ENCODE measurements at regions of chr7 and their contacts with region 1.

Region 1: GRCh38 chr7:134992626-134993179 is 6.4 kb downstream of the AGBL3 start:
- DNase-seq: peak; percentile 96
- ATAC-seq: peak; percentile 67
- H3K4me3 ChIP-seq: peak overlapping the region; percentile 32; the same call in 1 of the 2 replicates
- H3K27ac ChIP-seq: peak overlapping the region; percentile 99
- H3K4me1 ChIP-seq: peaks cover 61% of the 10 kb centered on the region
- H3K27me3 ChIP-seq: no peaks in the 10 kb centered on the region
- CTCF ChIP-seq: no peak
- EP300 ChIP-seq: peak; percentile 86 to 95
- POLR2A ChIP-seq: peak; percentile 77
- RAD21 ChIP-seq: no peak

Region 2: DNA sequence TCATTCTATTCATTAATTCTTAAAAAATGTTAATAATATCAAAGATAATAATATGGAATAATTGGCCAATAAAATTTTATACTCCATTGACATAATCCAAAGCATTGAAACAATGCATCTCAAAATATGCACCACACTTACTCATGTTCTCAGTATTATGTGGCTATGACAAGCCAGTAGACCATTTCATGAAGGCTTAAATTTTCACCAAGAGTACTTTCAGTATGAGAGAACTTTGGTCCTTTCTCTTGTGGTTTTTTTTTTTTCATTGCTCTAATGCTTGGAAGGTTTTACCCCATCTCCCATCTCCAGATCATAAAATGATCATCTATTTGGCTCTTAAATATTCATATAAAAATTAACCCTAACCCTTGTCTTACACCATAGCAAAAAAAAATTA is 109.7 kb after region 1 on chr7:
- CTCF ChIA-PET with region 1: interaction called, 4 read pairs
- POLR2A ChIA-PET with region 1: interaction called, 3 read pairs
- RAD21 ChIA-PET with region 1: interaction called, 3 read pairs
- SMC1A ChIA-PET with region 1: interaction called, 4 read pairs
- in situ Hi-C with region 1: no loop called
- intact Hi-C with region 1: loop called (anchors 2 kb)
- DNase-seq: peak; percentile 41
- ATAC-seq: peak; percentile 99
- H3K4me3 ChIP-seq: no peak overlapping the region
- H3K27ac ChIP-seq: no peak overlapping the region
- H3K4me1 ChIP-seq: no peaks in the 10 kb centered on the region
- H3K27me3 ChIP-seq: no peaks in the 10 kb centered on the region
- CTCF ChIP-seq: no peak
- EP300 ChIP-seq: peak in 1 of 2 experiments; percentile 64; a peak in 1 of 4 replicates
- POLR2A ChIP-seq: no peak
- RAD21 ChIP-seq: no peak

Region 3: GRCh38 chr7:135160098-135160857 is 167.6 kb after region 1 on chr7:
- CTCF ChIA-PET with region 1: interaction called, 28 read pairs
- POLR2A ChIA-PET with region 1: interaction called, 31 read pairs
- RAD21 ChIA-PET with region 1: interaction called, 39 read pairs
- SMC1A ChIA-PET with region 1: interaction called, 26 read pairs
- in situ Hi-C with region 1: loop called (anchors 5 kb)
- intact Hi-C with region 1: no loop called
- DNase-seq: no peak
- ATAC-seq: peak; percentile 59
- H3K4me3 ChIP-seq: no peak overlapping the region; the same call in 1 of the 2 replicates
- H3K27ac ChIP-seq: peak overlapping the region; percentile 84
- H3K4me1 ChIP-seq: peaks cover 32% of the 10 kb centered on the region
- H3K27me3 ChIP-seq: no peaks in the 10 kb centered on the region
- CTCF ChIP-seq: no peak
- EP300 ChIP-seq: peak in 1 of 2 experiments; percentile 15; a peak in 1 of 4 replicates
- POLR2A ChIP-seq: no peak; the same call in 1 of the 2 replicates
- RAD21 ChIP-seq: no peak

Region 4: DNA sequence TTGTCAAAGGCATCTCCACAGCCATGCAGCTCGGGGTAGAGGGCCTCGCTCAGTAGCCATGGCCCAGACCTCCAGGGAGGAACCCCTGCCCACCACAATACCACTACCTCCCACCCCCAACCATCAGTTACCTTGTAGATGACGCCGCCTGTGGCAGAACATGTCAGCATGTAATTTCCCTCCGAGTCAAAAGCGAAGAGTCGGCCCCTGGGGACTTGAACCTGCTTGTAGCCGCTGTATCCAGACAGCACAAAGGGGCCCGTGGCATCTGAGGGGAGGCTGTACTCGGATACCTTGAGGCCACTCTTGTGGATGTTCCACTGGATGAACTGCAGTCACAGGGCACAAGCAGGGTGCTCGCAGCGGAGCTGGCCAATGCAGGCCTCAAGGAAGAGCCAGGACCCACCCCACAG is 194.1 kb after region 1 on chr7:
- CTCF ChIA-PET with region 1: interaction called, 5 read pairs
- POLR2A ChIA-PET with region 1: interaction called, 29 read pairs
- RAD21 ChIA-PET with region 1: interaction called, 27 read pairs
- SMC1A ChIA-PET with region 1: interaction called, 19 read pairs
- in situ Hi-C with region 1: no loop called
- intact Hi-C with region 1: no loop called
- DNase-seq: no peak
- ATAC-seq: peak; percentile 77
- H3K4me3 ChIP-seq: peak overlapping the region; percentile 25; the same call in 1 of the 2 replicates
- H3K27ac ChIP-seq: peak overlapping the region; percentile 58
- H3K4me1 ChIP-seq: peaks cover 33% of the 10 kb centered on the region
- H3K27me3 ChIP-seq: no peaks in the 10 kb centered on the region
- CTCF ChIP-seq: peak in 1 of 3 experiments; percentile 24; a peak in 1 of 6 replicates
- EP300 ChIP-seq: peak; percentile 94 to 95; a peak in 3 of 4 replicates
- POLR2A ChIP-seq: peak; percentile 65
- RAD21 ChIP-seq: peak; percentile 27; the same call in 1 of the 2 replicates

Region 5: DNA sequence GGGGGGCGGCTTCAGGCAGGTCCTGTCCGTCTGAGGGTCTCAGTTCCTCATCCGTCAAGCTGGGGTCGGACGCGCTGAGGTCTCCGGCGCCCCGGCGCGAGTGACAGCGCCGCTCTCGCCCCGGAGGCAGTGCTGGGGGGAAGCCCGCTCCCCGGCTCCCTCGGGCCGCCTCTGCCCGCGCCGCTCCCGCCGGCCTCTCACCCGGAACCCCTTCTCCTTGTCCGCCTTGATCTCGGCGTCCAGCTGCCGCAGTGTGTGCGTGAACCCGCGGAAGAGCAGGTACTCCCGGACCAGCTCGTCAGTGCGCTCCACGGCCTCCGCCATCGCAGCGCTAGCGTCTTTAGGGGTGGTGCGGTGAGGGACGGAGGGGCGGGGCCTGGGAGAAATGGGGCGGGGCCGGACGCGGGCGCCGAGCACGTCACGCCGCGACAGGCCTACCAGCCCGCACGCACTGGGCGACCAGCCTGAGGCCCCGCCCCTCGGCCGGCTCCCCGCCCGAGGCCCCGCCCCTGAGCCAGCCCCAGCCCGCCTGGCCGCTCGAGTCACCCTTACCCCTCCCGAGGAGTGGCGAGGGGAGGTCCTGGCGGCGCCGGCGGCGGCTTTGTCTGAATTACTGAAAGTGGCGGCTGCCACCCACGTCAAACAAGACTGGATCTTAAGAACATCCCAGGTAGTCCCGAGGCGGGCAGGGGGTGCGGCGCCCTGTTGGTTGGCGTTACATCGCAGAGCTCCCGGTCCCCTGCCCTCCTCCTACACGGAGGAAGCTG is 218.7 kb after region 1 on chr7 and contains the start of gene WDR91:
- CTCF ChIA-PET with region 1: interaction called, 14 read pairs
- POLR2A ChIA-PET with region 1: interaction called, 10 read pairs
- RAD21 ChIA-PET with region 1: interaction called, 52 read pairs
- SMC1A ChIA-PET with region 1: interaction called, 28 read pairs
- in situ Hi-C with region 1: no loop called
- intact Hi-C with region 1: no loop called
- DNase-seq: peak; percentile 81
- ATAC-seq: peak; percentile 83
- H3K4me3 ChIP-seq: peak within 1 kb of the TSS; percentile 99
- H3K27ac ChIP-seq: peak within 1 kb of the TSS; percentile 91
- H3K4me1 ChIP-seq: peaks cover 39% of the 10 kb centered on the region
- H3K27me3 ChIP-seq: no peaks in the 10 kb centered on the region
- CTCF ChIP-seq: no peak
- EP300 ChIP-seq: no peak
- POLR2A ChIP-seq: peak; percentile 98
- RAD21 ChIP-seq: no peak
- polyA plus RNA-seq, gene WDR91: 7.6 to 10.1 TPM

Region 6: GRCh38 chr7:135441791-135442190 is 449.1 kb after region 1 on chr7:
- CTCF ChIA-PET with region 1: no interaction called
- POLR2A ChIA-PET with region 1: no interaction called
- RAD21 ChIA-PET with region 1: no interaction called
- SMC1A ChIA-PET with region 1: no interaction called
- in situ Hi-C with region 1: no loop called
- intact Hi-C with region 1: no loop called
- DNase-seq: no peak
- ATAC-seq: peak; percentile 31; the same call in 1 of the 3 replicates
- H3K4me3 ChIP-seq: no peak overlapping the region
- H3K27ac ChIP-seq: no peak overlapping the region
- H3K4me1 ChIP-seq: peaks cover 5% of the 10 kb centered on the region; the same call in 1 of the 2 replicates
- H3K27me3 ChIP-seq: no peaks in the 10 kb centered on the region
- CTCF ChIP-seq: no peak
- EP300 ChIP-seq: no peak
- POLR2A ChIP-seq: no peak
- RAD21 ChIP-seq: no peak

Region 7: DNA sequence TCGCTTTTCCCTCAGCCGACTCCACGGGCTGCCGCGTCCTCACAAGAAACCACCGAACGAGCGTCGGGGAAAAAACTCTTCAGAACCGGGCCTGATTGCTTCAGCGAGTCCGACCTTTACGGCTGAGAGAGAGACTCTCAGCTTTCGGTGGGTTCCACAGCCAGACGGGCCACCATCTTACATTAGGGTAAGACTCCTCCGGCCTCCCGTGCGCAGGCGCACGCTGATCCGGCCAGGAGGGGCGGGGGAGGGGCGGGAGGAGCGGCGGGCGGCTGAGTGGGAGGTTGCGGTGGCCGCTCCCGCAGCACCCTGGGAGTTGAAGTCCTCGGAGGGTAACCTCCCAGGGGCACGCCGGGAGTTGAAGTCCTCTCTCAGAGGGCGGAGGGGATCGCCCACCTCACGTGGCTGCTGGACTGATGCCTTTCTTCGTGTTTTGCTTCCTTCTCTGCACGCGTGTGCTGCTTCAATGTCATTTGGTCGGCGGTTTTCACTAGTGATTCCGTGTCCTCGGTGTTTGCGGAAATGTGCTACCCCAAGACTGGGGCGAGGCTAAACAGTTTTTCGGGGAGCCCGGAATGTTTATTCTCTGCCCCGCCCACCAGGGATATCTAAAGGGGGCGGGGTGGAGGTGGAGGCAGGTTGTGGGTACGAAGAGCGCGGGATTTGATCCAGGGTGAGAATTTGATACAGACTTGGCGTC is 517.4 kb after region 1 on chr7 and contains the start of gene CNOT4:
- CTCF ChIA-PET with region 1: no interaction called
- POLR2A ChIA-PET with region 1: no interaction called
- RAD21 ChIA-PET with region 1: no interaction called
- SMC1A ChIA-PET with region 1: no interaction called
- in situ Hi-C with region 1: no loop called
- intact Hi-C with region 1: loop called (anchors 5 kb)
- DNase-seq: peak; percentile 82
- ATAC-seq: peak; percentile 93
- H3K4me3 ChIP-seq: peak within 1 kb of the TSS; percentile 94
- H3K27ac ChIP-seq: peak within 1 kb of the TSS; percentile 97
- H3K4me1 ChIP-seq: no peaks in the 10 kb centered on the region
- H3K27me3 ChIP-seq: no peaks in the 10 kb centered on the region
- CTCF ChIP-seq: no peak
- EP300 ChIP-seq: no peak
- POLR2A ChIP-seq: peak; percentile 89
- RAD21 ChIP-seq: no peak
- polyA plus RNA-seq, gene CNOT4: 11.3 to 29.6 TPM

Region 8: DNA sequence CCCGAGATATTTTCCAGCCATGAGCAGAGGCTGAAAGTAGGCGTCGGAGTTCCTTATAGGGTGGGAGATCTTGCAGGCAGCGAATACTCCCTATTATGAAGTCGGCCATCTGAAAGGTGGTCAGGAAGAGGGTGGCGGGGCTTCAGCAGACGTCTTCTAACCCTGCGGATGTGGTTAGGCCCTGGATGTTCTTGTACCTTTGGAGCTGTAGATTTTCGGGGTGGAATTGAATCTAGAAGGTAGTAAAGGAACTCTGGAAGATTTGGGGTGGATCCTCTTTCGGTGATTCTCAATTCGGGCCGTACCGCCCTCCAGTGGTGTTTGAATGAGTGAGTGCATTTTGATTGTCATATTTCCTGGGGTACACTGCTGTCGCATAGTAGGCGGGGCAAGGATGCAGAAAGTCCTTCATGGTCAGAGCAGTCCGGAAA is 565.6 kb after region 1 on chr7:
- CTCF ChIA-PET with region 1: no interaction called
- POLR2A ChIA-PET with region 1: no interaction called
- RAD21 ChIA-PET with region 1: no interaction called
- SMC1A ChIA-PET with region 1: no interaction called
- in situ Hi-C with region 1: loop called (anchors 10 kb)
- intact Hi-C with region 1: no loop called
- DNase-seq: peak; percentile 62
- ATAC-seq: peak; percentile 86
- H3K4me3 ChIP-seq: peak overlapping the region; percentile 96
- H3K27ac ChIP-seq: peak overlapping the region; percentile 95
- H3K4me1 ChIP-seq: peaks cover 25% of the 10 kb centered on the region
- H3K27me3 ChIP-seq: no peaks in the 10 kb centered on the region
- CTCF ChIP-seq: peak; percentile 62 to 73 (median 71); a peak in 5 of 6 replicates
- EP300 ChIP-seq: no peak
- POLR2A ChIP-seq: no peak
- RAD21 ChIP-seq: peak; percentile 64